ENCODE measurements at regions of chr3 and their contacts with region 1.

Region 1: DNA sequence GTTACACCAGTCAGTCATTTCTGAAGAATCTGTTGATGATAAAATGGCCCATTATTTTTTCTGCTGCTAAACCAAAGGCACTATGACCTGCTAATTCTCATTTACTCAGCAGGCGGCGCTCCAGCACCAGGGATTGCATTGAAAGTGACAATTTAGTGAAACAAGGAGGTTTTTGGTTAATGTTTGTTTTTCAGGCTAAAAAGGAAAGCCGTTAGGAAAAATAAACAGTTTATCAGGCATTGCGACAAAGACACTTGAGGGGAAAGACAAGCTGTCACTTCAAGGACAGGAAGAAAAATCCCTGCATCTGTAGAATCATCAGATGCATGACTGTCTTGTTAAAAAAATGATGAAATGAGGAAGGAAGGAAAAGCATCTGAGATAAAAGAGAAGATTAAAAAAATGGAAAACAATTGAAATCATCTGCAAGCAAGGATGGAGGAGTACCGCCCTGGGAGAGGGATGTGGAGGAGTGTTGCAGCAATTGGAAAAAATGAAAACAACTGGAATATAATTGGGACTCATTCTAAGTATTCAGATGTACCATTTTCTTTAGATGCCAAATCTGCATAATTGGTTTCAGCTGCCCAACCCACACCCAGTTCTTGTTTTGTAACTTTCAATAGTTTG is 54.0 kb downstream of the NR1D2 start:
- DNase-seq: peak; percentile 65
- ATAC-seq: peak; percentile 47
- H3K4me3 ChIP-seq: no peak overlapping the region
- H3K4me3 Mint-ChIP-seq: no peak overlapping the region
- H3K27ac ChIP-seq: no peak overlapping the region
- H3K27ac Mint-ChIP-seq: no peak overlapping the region
- H3K4me1 ChIP-seq: peaks cover 4 to 7% of the 10 kb centered on the region in 2 donors
- H3K4me1 Mint-ChIP-seq: peaks cover 6% of the 10 kb centered on the region
- H3K27me3 ChIP-seq: no peaks in the 10 kb centered on the region
- H3K27me3 Mint-ChIP-seq: peaks cover 8% of the 10 kb centered on the region
- CTCF ChIP-seq: peak; percentile 94

Region 2: GRCh38 chr3:24640330-24640877 is 641.3 kb after region 1 on chr3:
- CTCF ChIA-PET with region 1: no interaction called
- POLR2A ChIA-PET with region 1: no interaction called
- intact Hi-C with region 1: loop called (anchors 2 kb)
- DNase-seq: peak; percentile 26
- ATAC-seq: no peak
- H3K4me3 ChIP-seq: no peak overlapping the region
- H3K4me3 Mint-ChIP-seq: no peak overlapping the region
- H3K27ac ChIP-seq: no peak overlapping the region
- H3K27ac Mint-ChIP-seq: no peak overlapping the region
- H3K4me1 ChIP-seq: no peaks in the 10 kb centered on the region
- H3K4me1 Mint-ChIP-seq: no peaks in the 10 kb centered on the region
- H3K27me3 ChIP-seq: no peaks in the 10 kb centered on the region
- H3K27me3 Mint-ChIP-seq: peaks cover 18% of the 10 kb centered on the region
- CTCF ChIP-seq: peak; percentile 46

Measured in B cell (primary cell).